Heart left ventricle (tissue), 16 donors: ENCODE measurements at regions of chr6 and their contacts with region 1.

Region 1: DNA sequence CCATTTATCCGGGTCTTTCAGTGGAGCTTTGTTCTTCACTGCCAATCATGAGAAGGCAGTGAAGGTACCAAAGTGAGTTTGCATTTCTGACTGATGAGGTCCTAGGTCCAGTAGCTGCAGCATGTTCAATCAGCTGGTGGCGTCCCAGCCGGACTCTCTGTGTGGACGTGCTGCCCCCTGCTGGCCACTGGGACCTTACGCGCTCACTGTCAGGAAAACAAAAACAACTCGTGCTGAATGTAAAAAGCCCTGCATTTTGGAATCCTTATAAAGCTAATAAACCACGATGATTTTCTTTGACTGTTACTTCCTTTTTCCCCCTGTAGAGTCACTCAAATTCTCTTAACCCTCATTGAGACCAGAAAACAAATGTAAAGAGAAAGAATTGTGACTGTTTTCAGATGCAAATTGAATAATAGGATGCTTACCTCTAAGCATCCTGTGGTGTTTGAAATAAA is 4.9 kb upstream of the CD24 start:
- DNase-seq: peak; percentile 75 to 89 (median 83)
- ATAC-seq: peak in 3 of 4 donors; percentile 87 to 89 (median 88)
- H3K4me3 ChIP-seq: no peak overlapping the region
- H3K27ac ChIP-seq: no peak overlapping the region
- H3K4me1 ChIP-seq: peaks cover 0 to 12% (median 3%) of the 10 kb centered on the region in 12 donors
- H3K27me3 ChIP-seq: peaks cover 12 to 77% (median 38%) of the 10 kb centered on the region in 9 donors
- CTCF ChIP-seq: peak; percentile 84 to 94 (median 90)
- POLR2A ChIP-seq: no peak

Region 2: DNA sequence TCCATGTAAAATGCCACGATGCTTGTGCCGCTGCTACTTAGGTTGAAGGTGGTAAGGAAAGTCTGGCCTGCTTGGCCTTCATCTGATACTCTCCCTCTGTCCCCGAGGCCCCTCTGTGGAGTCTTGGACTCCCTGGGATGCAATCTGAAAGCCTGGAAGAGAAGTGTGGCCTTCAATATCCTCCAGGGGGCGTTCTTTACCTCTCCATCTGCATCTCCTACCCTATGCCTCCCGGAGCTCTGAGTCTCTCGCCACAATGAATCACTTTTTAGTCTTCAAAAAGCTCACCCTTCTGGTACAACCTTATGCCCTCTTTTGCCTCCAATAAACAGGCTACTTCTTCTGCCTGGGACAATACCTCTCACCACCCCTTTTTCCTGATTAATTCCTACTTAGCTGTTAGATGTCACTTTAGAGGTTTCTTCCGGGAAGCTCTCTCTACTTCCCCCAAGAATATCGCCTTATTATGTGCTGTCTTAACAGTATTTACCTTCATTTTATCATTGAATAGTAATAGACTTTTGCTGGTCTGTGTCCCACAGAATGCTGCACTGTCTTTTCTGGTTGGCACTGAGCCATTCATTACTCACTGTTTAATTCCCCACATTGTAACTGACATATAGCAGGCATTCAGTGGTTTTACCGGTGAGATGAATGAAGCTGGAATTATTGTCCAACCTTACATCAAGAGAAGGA is 640.0 kb before region 1 on chr6:
- intact Hi-C with region 1: loop called in 9 of 10 experiments (anchors 5 to 10 kb)
- DNase-seq: peak in 3 of 5 donors; percentile 9 to 30 (median 24)
- ATAC-seq: peak in 3 of 4 donors; percentile 71 to 88 (median 82)
- H3K4me3 ChIP-seq: peak overlapping the region in 1 of 12 donors; percentile 7
- H3K27ac ChIP-seq: no peak overlapping the region
- H3K4me1 ChIP-seq: peaks cover 0 to 5% (median 0%) of the 10 kb centered on the region in 12 donors
- H3K27me3 ChIP-seq: peaks cover 0 to 5% (median 0%) of the 10 kb centered on the region in 9 donors
- CTCF ChIP-seq: peak; percentile 54 to 74 (median 65)
- POLR2A ChIP-seq: no peak

Region 3: GRCh38 chr6:106444777-106445507 is 534.5 kb before region 1 on chr6:
- intact Hi-C with region 1: loop called (anchors 2 to 5 kb)
- DNase-seq: no peak
- ATAC-seq: peak in 3 of 4 donors; percentile 59 to 68 (median 67)
- H3K4me3 ChIP-seq: no peak overlapping the region
- H3K27ac ChIP-seq: no peak overlapping the region
- H3K4me1 ChIP-seq: peaks cover 0 to 23% (median 0%) of the 10 kb centered on the region in 12 donors
- H3K27me3 ChIP-seq: peaks cover 0 to 39% (median 3%) of the 10 kb centered on the region in 9 donors
- CTCF ChIP-seq: peak; percentile 70 to 87 (median 76)
- POLR2A ChIP-seq: no peak

Region 4: DNA sequence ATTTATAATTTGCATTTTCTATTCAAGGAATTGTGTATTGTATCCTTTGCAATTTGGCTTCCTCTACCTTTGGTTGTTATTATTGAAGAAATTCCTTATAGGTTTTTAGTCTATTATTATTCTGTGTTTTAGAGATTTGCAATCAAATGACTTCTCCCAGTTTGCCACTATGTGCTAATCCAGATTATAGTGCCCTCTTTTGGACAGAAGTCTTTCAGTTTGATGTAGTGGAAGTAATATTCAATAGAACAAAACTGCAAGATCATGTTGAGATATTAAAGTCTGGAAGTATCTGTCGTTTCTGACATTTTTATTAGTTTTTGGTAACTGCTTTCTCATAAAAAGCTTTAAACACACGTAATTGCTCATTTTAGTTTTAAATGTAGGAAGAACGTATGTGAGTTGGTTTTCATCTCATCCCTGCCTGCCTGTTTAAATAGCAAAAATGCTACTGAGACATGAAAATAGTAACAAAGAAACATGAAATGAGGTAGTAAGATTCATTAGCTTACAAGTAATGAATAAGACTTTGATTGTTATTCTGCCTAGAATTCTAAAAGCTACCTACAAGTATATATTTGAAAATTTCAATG is 423.0 kb before region 1 on chr6:
- intact Hi-C with region 1: loop called in 1 of 10 experiments (anchors 10 kb)
- DNase-seq: no peak
- ATAC-seq: no peak
- H3K4me3 ChIP-seq: no peak overlapping the region
- H3K27ac ChIP-seq: no peak overlapping the region
- H3K4me1 ChIP-seq: peaks cover 0 to 10% (median 0%) of the 10 kb centered on the region in 12 donors
- H3K27me3 ChIP-seq: no peaks in the 10 kb centered on the region
- CTCF ChIP-seq: peak in 10 of 12 donors; percentile 5 to 50 (median 34)
- POLR2A ChIP-seq: no peak

Region 5: DNA sequence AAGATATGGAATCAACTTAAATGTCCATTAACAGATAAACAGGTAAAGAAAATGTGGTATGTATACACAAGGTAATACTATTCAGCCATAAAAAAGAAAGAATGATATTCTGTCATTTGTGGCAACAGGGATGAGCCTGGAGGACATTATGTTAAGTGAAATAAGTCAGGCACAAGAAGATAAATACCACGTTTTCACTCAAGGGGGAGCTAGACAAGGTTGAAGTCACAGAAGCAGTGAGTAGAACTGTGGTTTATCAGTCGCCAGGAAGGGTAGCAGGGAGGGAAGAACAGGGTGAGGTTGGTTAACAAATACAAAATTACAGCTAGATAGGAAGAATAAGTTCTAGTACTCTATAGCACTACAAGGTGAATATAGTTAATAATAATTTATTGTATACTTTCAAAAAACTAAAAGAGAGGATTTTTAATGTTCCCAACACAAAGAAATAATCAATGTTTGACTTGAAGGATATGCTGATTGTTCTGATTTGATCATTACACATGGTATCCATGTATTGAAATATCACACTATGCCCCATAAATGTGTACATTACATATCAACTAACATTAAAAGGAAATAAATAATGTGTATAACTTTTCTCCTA is 371.3 kb before region 1 on chr6:
- intact Hi-C with region 1: loop called in 4 of 10 experiments (anchors 5 to 10 kb)
- DNase-seq: no peak
- ATAC-seq: no peak
- H3K4me3 ChIP-seq: no peak overlapping the region
- H3K27ac ChIP-seq: no peak overlapping the region
- H3K4me1 ChIP-seq: no peaks in the 10 kb centered on the region
- H3K27me3 ChIP-seq: no peaks in the 10 kb centered on the region
- CTCF ChIP-seq: peak in 10 of 12 donors; percentile 15 to 47 (median 35)
- POLR2A ChIP-seq: no peak

Region 6: GRCh38 chr6:106629103-106629858 is 350.2 kb before region 1 on chr6 and contains the starts of genes QRSL1 and RTN4IP1:
- intact Hi-C with region 1: loop called in 1 of 10 experiments (anchors 10 kb)
- DNase-seq: peak; percentile 85 to 90 (median 88)
- ATAC-seq: peak; percentile 99 to 100 (median 100)
- H3K4me3 ChIP-seq: peak within 1 kb of the TSS; percentile 61 to 97 (median 90)
- H3K27ac ChIP-seq: peak within 1 kb of the TSS in 11 of 12 donors; percentile 68 to 90 (median 80)
- H3K4me1 ChIP-seq: peaks cover 0 to 30% (median 14%) of the 10 kb centered on the region in 12 donors
- H3K27me3 ChIP-seq: no peaks in the 10 kb centered on the region
- CTCF ChIP-seq: no peak
- POLR2A ChIP-seq: no peak
- total RNA-seq, gene QRSL1: 8.6 to 18.9 (median 14.4) TPM
- total RNA-seq, gene RTN4IP1: 6.9 to 21.8 (median 13.6) TPM

Region 7: GRCh38 chr6:106939848-106940247 is 39.6 kb before region 1 on chr6:
- intact Hi-C with region 1: no loop called
- DNase-seq: no peak
- ATAC-seq: no peak
- H3K4me3 ChIP-seq: no peak overlapping the region
- H3K27ac ChIP-seq: no peak overlapping the region
- H3K4me1 ChIP-seq: no peaks in the 10 kb centered on the region
- H3K27me3 ChIP-seq: peaks cover 0 to 20% (median 0%) of the 10 kb centered on the region in 9 donors
- CTCF ChIP-seq: no peak
- POLR2A ChIP-seq: no peak

Region 8: DNA sequence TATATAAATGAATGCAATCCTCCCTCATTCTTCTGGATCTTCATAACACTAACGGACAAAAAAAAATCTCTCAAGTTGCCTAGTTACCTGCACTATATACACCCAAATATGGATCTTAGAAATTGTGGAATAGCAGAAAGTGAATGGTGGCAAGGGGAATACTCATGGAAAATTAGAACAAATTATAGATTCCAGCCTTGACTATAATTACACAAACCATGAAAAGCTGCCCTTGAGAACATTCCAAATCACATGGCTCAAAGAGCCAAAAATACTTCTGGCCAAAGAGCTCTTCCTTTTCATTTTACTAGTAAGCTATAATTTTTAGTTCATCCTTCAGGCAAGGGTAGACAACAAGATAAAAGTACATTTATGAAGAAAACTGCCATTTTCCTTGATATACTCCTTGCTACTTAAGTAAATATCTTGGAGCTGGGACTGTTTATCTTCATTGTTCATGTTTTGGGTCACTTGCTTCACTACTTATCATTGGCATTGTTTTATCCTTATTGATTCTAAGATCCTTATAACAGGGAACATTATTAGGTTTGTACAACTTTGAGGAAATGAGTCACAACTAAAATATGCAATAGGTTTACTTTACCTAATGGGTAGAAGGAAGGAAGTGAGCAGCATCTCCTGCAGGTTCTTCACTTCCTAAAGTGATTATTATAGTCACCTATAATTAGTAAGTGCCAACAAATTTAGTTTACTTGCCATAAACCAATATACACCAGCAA is 42.2 kb after region 1 on chr6:
- intact Hi-C with region 1: no loop called
- DNase-seq: no peak
- ATAC-seq: no peak
- H3K4me3 ChIP-seq: no peak overlapping the region
- H3K27ac ChIP-seq: no peak overlapping the region
- H3K4me1 ChIP-seq: peaks cover 0 to 10% (median 3%) of the 10 kb centered on the region in 12 donors
- H3K27me3 ChIP-seq: no peaks in the 10 kb centered on the region
- CTCF ChIP-seq: no peak
- POLR2A ChIP-seq: no peak

Region 9: GRCh38 chr6:107218142-107218541 is 238.7 kb after region 1 on chr6:
- intact Hi-C with region 1: no loop called
- DNase-seq: no peak
- ATAC-seq: no peak
- H3K4me3 ChIP-seq: no peak overlapping the region
- H3K27ac ChIP-seq: no peak overlapping the region
- H3K4me1 ChIP-seq: peaks cover 0 to 2% (median 0%) of the 10 kb centered on the region in 12 donors
- H3K27me3 ChIP-seq: no peaks in the 10 kb centered on the region
- CTCF ChIP-seq: no peak
- POLR2A ChIP-seq: no peak